OCI-LY7 (cell line): ENCODE measurements at regions of chr20 and their contacts with region 1.

Region 1: DNA sequence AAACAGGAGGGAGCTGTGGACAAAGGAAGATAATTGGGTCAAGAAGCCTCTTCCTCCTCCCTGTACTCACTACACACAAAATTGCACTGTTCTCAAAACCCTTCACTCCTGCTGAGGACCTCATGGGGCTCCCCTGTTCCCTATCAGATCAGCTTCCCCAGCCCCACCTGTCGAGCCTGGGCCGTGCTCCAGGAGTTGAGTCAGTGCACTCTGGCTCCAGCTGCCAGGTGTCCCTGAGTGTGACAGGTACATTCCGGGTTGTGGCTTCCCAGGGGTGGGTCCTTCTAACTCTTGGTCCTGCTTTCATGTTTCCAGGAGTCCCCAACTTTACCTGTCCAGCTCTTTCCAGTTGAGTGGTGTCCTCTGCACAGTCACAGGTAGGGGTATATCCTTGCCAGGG is 8.4 kb downstream of the RAB5IF start:
- DNase-seq: no peak
- H3K4me3 ChIP-seq: no peak overlapping the region
- H3K27ac ChIP-seq: no peak overlapping the region
- H3K4me1 ChIP-seq: no peaks in the 10 kb centered on the region
- CTCF ChIP-seq: no peak

Region 2: GRCh38 chr20:36919715-36920333 is 305.9 kb after region 1 on chr20:
- CTCF ChIA-PET with region 1: no interaction called
- POLR2A ChIA-PET with region 1: interaction called, 3 read pairs
- intact Hi-C with region 1: loop called (anchors 1 kb)
- DNase-seq: peak; percentile 70
- H3K4me3 ChIP-seq: no peak overlapping the region
- H3K27ac ChIP-seq: no peak overlapping the region
- H3K4me1 ChIP-seq: no peaks in the 10 kb centered on the region
- CTCF ChIP-seq: peak; percentile 99